SK-N-SH (cell line): ENCODE measurements at regions of chr17 and their contacts with region 1.

Region 1: DNA sequence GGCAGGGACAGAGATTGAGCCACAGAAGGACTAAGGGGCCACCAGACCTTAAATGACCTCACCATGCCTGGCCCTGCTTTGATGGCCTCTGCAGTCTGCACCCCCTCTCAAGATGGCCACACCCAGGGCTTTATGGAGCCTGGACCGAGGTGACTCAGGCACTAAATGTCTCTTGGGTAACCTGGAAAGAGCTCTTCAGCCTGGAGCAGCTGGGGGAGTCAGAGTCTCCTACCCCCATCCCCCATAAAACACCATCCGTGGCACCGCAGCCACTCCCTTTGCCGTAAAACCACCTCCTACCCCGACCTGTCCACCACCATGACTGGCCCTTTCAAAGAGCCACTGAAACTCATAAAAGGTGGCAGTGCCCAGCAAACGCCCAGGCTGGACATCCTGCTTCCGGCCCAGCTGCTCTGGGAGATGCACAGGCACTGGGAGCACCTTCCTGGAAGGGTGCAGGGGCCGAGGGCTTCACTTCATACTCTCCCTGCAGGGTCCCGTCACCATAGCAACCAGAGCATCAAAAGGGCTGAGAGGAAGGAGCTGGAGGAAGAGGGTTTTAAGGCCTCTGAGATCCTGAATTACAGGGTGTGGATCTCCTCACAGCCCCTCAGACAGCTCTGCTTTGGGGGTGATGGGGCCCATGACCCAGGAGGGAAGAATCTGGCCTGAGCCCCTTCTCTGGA is 22.3 kb downstream of the FOXN1 start:
- DNase-seq: no peak
- H3K4me3 ChIP-seq: no peak overlapping the region
- H3K27ac ChIP-seq: no peak overlapping the region
- H3K4me1 ChIP-seq: peaks cover 0 to 6% of the 10 kb centered on the region in 2 experiments; a peak in 1 of 4 replicates
- H3K27me3 ChIP-seq: peaks cover 10% of the 10 kb centered on the region; the same call in 1 of the 2 replicates
- CTCF ChIP-seq: no peak
- EP300 ChIP-seq: no peak
- RAD21 ChIP-seq: no peak

Region 2: GRCh38 chr17:28487881-28488532 is 40.5 kb before region 1 on chr17:
- CTCF ChIA-PET with region 1: no interaction called
- POLR2A ChIA-PET with region 1: no interaction called
- DNase-seq: no peak
- H3K4me3 ChIP-seq: no peak overlapping the region
- H3K27ac ChIP-seq: no peak overlapping the region
- H3K4me1 ChIP-seq: no peaks in the 10 kb centered on the region
- H3K27me3 ChIP-seq: peaks cover 20% of the 10 kb centered on the region; the same call in 1 of the 2 replicates
- CTCF ChIP-seq: no peak
- EP300 ChIP-seq: no peak
- RAD21 ChIP-seq: no peak

Region 3: GRCh38 chr17:28540231-28540630 is 11.8 kb after region 1 on chr17:
- CTCF ChIA-PET with region 1: interaction called, 47 read pairs
- POLR2A ChIA-PET with region 1: no interaction called
- DNase-seq: peak; percentile 21
- H3K4me3 ChIP-seq: no peak overlapping the region
- H3K27ac ChIP-seq: no peak overlapping the region
- H3K4me1 ChIP-seq: no peaks in the 10 kb centered on the region
- H3K27me3 ChIP-seq: no peaks in the 10 kb centered on the region
- CTCF ChIP-seq: no peak
- EP300 ChIP-seq: no peak
- RAD21 ChIP-seq: no peak